Activated CD8-positive, alpha-beta T cell treated with anti-CD3 and anti-CD28 coated beads for 36 hours (primary cell): ENCODE measurements at regions of chr1 and their contacts with region 1.

Region 1: DNA sequence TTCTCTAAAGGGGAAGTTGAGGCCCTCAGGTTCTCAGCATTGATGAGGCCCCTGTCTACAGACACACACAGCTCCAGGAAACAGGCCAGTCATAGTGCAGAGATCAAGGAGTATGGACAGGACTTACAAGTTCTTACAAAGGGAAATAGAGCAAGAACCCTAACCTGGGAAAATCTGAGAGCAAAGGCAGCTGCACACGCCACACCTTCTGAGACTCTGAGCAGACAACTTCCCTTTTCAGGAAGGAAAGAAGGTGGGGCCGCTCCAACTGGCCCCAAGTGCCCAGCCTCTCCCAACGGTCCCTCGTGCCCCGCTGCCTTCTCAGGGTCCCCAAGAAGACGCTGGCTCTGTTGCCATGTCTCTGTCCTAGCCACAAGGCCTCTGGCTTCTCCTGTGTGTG is 3.6 kb downstream of the NOC2L start:
- DNase-seq: no peak
- ATAC-seq: no peak
- H3K4me3 Mint-ChIP-seq: no peak overlapping the region
- H3K27ac Mint-ChIP-seq: no peak overlapping the region
- H3K4me1 Mint-ChIP-seq: peaks cover 13% of the 10 kb centered on the region
- H3K27me3 Mint-ChIP-seq: no peaks in the 10 kb centered on the region
- CTCF ChIP-seq: no peak

Region 2: DNA sequence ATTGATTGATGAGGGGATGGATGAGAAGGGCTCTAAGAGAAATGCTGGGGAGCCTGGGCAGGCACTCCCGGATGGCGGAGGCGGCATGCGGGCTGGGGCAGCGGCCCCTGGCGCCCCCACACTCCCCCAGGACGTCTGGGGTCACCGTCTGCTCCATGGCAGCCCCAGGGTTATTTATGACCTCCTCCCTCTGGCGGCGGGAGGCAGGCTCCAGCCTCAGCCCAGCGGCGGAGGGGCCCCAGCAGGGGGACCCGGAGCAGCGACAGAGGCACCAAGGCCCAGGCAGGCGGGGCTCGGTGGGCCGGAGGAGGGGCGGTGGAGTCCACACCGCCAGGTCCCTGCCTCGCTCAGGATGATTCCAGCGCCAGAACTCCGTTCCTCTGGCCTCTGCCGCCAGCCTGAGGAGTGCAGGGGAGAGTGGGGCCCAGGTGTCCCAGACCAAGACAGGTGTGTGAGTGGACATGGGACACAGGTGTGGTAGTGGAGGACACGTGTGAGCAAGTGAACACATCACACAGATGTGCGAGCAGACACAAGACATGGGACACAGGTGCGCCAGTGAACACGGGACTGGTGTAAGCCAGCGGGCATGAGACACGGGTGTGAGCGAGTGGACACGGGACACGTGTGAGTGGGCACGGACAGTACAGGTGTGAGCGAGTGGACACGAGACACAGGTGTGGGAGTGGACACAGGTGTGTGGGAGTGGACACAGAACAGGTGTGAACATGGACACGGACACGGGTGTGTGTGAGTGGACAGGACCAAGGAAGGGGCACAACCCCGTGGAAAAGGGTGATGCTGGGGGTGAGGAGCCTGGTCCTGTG is 34.2 kb before region 1 on chr1:
- CTCF ChIA-PET with region 1: no interaction called
- POLR2A ChIA-PET with region 1: no interaction called
- intact Hi-C with region 1: no loop called
- DNase-seq: no peak
- ATAC-seq: peak; percentile 43
- H3K4me3 Mint-ChIP-seq: no peak overlapping the region
- H3K27ac Mint-ChIP-seq: no peak overlapping the region
- H3K4me1 Mint-ChIP-seq: peaks cover 15% of the 10 kb centered on the region
- H3K27me3 Mint-ChIP-seq: peaks cover 40% of the 10 kb centered on the region
- CTCF ChIP-seq: peak; percentile 23

Region 3: GRCh38 chr1:941588-942383 is 13.7 kb before region 1 on chr1:
- CTCF ChIA-PET with region 1: no interaction called
- POLR2A ChIA-PET with region 1: interaction called, 17 read pairs
- intact Hi-C with region 1: no loop called
- DNase-seq: peak; percentile 50
- ATAC-seq: peak; percentile 29
- H3K4me3 Mint-ChIP-seq: peak overlapping the region; percentile 57
- H3K27ac Mint-ChIP-seq: no peak overlapping the region
- H3K4me1 Mint-ChIP-seq: peaks cover 4% of the 10 kb centered on the region
- H3K27me3 Mint-ChIP-seq: peaks cover 22% of the 10 kb centered on the region
- CTCF ChIP-seq: no peak